ENCODE measurements at regions of chr5 and their contacts with region 1.

Region 1: GRCh38 chr5:43305948-43306565 is 7.2 kb downstream of the HMGCS1 start:
- DNase-seq: no peak
- ATAC-seq: no peak

Region 2: GRCh38 chr5:43227655-43228054 is 78.4 kb before region 1 on chr5:
- intact Hi-C with region 1: loop called (anchors 2 kb)
- DNase-seq: no peak
- ATAC-seq: no peak

Measured in Right ventricle myocardium inferior (tissue), 1 donor.